Breast epithelium (tissue), 4 donors: ENCODE measurements at regions of chr11 and their contacts with region 1.

Region 1: DNA sequence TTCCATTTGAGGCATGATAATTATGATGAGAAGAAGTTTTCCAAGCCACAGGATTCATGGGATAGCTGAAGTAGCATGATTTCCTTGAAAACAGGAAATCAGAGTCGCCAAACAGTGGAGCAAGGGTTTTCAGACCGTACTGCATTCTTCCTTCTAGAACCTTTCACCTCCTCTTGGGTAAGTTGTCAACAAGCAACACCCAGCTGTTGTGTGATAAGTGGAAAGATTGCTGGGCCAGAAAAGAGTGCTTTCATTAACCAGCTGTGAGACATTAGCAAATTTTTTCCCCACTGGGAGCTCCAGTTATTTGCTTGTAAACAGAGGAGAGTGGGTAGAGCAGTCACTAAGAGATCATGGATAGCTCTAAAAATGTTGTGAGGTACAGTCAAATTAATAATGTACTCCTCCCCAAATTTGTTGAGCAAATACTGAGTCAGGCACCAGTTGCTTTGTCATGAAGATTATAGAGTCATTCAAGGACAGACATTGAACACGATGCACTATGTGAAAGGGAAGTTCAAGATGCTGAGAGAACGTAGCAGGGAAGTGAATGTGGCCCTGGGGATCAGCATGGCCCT is 11.7 kb upstream of the MPEG1 start:
- DNase-seq: no peak
- H3K4me3 ChIP-seq: no peak overlapping the region
- H3K27ac ChIP-seq: peak overlapping the region; percentile 22 to 67
- H3K4me1 ChIP-seq: no peaks in the 10 kb centered on the region
- H3K27me3 ChIP-seq: no peaks in the 10 kb centered on the region
- CTCF ChIP-seq: no peak
- POLR2A ChIP-seq: no peak

Region 2: GRCh38 chr11:57936050-57936418 is 1288.4 kb before region 1 on chr11:
- intact Hi-C with region 1: loop called (anchors 10 kb)
- DNase-seq: no peak
- H3K4me3 ChIP-seq: no peak overlapping the region
- H3K27ac ChIP-seq: no peak overlapping the region
- H3K4me1 ChIP-seq: no peaks in the 10 kb centered on the region
- H3K27me3 ChIP-seq: no peaks in the 10 kb centered on the region
- CTCF ChIP-seq: no peak
- POLR2A ChIP-seq: no peak

Region 3: GRCh38 chr11:59088162-59088561 is 136.3 kb before region 1 on chr11:
- intact Hi-C with region 1: no loop called
- DNase-seq: no peak
- H3K4me3 ChIP-seq: no peak overlapping the region
- H3K27ac ChIP-seq: no peak overlapping the region
- H3K4me1 ChIP-seq: no peaks in the 10 kb centered on the region
- H3K27me3 ChIP-seq: no peaks in the 10 kb centered on the region
- CTCF ChIP-seq: no peak
- POLR2A ChIP-seq: no peak